ENCODE measurements at regions of chr20 and their contacts with region 1.

Region 1: GRCh38 chr20:9298906-9299305 is 215.5 kb upstream of the LAMP5 start:
- DNase-seq: no peak
- H3K4me3 ChIP-seq: no peak overlapping the region
- H3K27ac ChIP-seq: no peak overlapping the region
- H3K4me1 ChIP-seq: no peaks in the 10 kb centered on the region
- H3K27me3 ChIP-seq: no peaks in the 10 kb centered on the region
- CTCF ChIP-seq: no peak

Region 2: GRCh38 chr20:8726460-8726859 is 572.4 kb before region 1 on chr20:
- intact Hi-C with region 1: no loop called
- DNase-seq: no peak
- H3K4me3 ChIP-seq: no peak overlapping the region
- H3K27ac ChIP-seq: no peak overlapping the region
- H3K4me1 ChIP-seq: no peaks in the 10 kb centered on the region
- H3K27me3 ChIP-seq: no peaks in the 10 kb centered on the region
- CTCF ChIP-seq: no peak

Region 3: DNA sequence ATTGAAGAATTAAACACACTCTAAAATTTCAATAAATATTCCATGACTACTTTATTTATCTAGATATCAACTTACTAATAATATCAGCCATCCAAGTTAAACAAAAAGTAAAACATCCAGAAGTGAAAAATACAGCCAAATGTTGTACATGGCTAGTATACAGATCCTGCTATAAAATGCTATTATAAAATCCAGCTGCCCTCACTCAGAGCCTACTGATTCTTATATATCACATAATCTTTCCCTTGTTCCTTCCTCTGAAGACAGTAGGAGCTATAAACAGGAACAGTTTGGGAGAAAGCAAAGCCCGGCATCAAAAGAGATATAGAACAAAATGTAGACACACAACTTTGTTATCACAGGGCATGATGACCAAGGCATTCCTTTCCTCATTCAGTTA is 17.1 kb before region 1 on chr20:
- intact Hi-C with region 1: loop called (anchors 1 kb)
- DNase-seq: no peak
- H3K4me3 ChIP-seq: no peak overlapping the region
- H3K27ac ChIP-seq: no peak overlapping the region
- H3K4me1 ChIP-seq: no peaks in the 10 kb centered on the region
- H3K27me3 ChIP-seq: no peaks in the 10 kb centered on the region
- CTCF ChIP-seq: no peak

Measured in ascending aorta (tissue), 2 donors.